ENCODE measurements at regions of chr2 and their contacts with region 1.

Region 1: GRCh38 chr2:231227309-231228162 is 29.1 kb downstream of the ARMC9 start:
- DNase-seq: peak; percentile 51
- ATAC-seq: peak; percentile 93
- H3K4me3 Mint-ChIP-seq: no peak overlapping the region
- H3K27ac Mint-ChIP-seq: peak overlapping the region; percentile 77
- H3K4me1 Mint-ChIP-seq: peaks cover 21% of the 10 kb centered on the region
- H3K27me3 Mint-ChIP-seq: no peaks in the 10 kb centered on the region
- CTCF ChIP-seq: peak; percentile 50

Region 2: GRCh38 chr2:231104115-231104713 is 123.3 kb before region 1 on chr2:
- CTCF ChIA-PET with region 1: interaction called, 14 read pairs
- POLR2A ChIA-PET with region 1: no interaction called
- DNase-seq: peak; percentile 59
- ATAC-seq: peak; percentile 88
- H3K4me3 Mint-ChIP-seq: no peak overlapping the region
- H3K27ac Mint-ChIP-seq: no peak overlapping the region
- H3K4me1 Mint-ChIP-seq: no peaks in the 10 kb centered on the region
- H3K27me3 Mint-ChIP-seq: no peaks in the 10 kb centered on the region
- CTCF ChIP-seq: peak; percentile 39; the same call in 1 of the 2 replicates

Region 3: GRCh38 chr2:231245253-231246094 is 17.9 kb after region 1 on chr2:
- CTCF ChIA-PET with region 1: interaction called, 17 read pairs
- POLR2A ChIA-PET with region 1: interaction called, 3 read pairs
- DNase-seq: no peak
- ATAC-seq: no peak
- H3K4me3 Mint-ChIP-seq: no peak overlapping the region
- H3K27ac Mint-ChIP-seq: peak overlapping the region; percentile 69
- H3K4me1 Mint-ChIP-seq: peaks cover 22% of the 10 kb centered on the region
- H3K27me3 Mint-ChIP-seq: no peaks in the 10 kb centered on the region
- CTCF ChIP-seq: no peak

Region 4: DNA sequence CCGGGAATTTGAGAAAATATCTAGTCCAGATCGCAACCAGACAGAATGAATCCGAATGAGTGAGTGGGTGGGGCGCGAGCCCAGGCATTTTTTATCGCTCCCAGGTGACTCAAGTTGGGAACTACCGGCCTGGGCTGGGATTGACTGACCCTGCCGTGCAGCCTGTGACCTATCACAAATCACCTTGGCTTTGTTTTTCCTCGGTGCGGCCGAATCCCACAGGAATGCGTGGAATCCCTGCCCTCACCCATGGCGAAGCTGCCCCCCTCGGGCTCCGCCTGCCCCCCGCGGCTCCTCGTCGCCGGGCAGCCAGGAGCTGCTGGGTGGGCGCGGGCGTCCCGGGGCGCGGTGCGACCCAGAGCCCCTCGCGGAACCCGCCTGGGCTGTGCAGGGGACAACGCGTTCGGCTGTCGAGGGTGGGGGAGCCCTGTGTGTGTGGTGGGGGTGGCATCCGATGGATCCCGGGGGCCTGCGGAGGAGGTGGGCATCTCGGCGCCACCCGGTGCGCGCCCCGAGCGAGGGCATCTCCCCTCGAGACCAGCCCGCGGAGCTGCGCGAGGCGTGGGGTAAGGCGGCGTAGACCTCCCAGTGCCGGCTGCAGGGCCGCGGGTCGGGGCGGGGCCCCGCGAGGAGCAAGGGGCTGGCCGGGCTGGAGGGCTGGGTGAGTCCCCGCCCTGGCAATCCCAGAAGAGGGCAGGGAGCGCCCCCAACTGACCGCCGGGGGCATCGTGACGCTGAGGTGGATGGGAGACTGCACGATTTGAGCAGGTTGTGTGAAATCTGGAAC is 184.5 kb after region 1 on chr2:
- CTCF ChIA-PET with region 1: interaction called, 46 read pairs
- POLR2A ChIA-PET with region 1: no interaction called
- DNase-seq: peak; percentile 95
- ATAC-seq: peak; percentile 85
- H3K4me3 Mint-ChIP-seq: peak overlapping the region; percentile 69
- H3K27ac Mint-ChIP-seq: peak overlapping the region; percentile 99
- H3K4me1 Mint-ChIP-seq: peaks cover 60% of the 10 kb centered on the region
- H3K27me3 Mint-ChIP-seq: no peaks in the 10 kb centered on the region
- CTCF ChIP-seq: peak; percentile 76

Region 5: GRCh38 chr2:231597014-231597611 is 369.6 kb after region 1 on chr2:
- CTCF ChIA-PET with region 1: no interaction called
- POLR2A ChIA-PET with region 1: no interaction called
- DNase-seq: no peak
- ATAC-seq: no peak
- H3K4me3 Mint-ChIP-seq: no peak overlapping the region
- H3K27ac Mint-ChIP-seq: no peak overlapping the region
- H3K4me1 Mint-ChIP-seq: peaks cover 10% of the 10 kb centered on the region
- H3K27me3 Mint-ChIP-seq: no peaks in the 10 kb centered on the region
- CTCF ChIP-seq: no peak